ENCODE measurements at regions of chr17 and their contacts with region 1.

Region 1: GRCh38 chr17:8057691-8058114 is 18.8 kb downstream of the ALOX15B start:
- DNase-seq: no peak
- H3K4me3 ChIP-seq: no peak overlapping the region
- H3K27ac ChIP-seq: no peak overlapping the region
- H3K4me1 ChIP-seq: peaks cover 5 to 17% (median 11%) of the 10 kb centered on the region in 4 donors
- H3K27me3 ChIP-seq: peaks cover 3 to 74% (median 29%) of the 10 kb centered on the region in 4 donors
- CTCF ChIP-seq: peak; percentile 76 to 82 (median 77)
- EP300 ChIP-seq: no peak
- POLR2A ChIP-seq: no peak

Region 2: DNA sequence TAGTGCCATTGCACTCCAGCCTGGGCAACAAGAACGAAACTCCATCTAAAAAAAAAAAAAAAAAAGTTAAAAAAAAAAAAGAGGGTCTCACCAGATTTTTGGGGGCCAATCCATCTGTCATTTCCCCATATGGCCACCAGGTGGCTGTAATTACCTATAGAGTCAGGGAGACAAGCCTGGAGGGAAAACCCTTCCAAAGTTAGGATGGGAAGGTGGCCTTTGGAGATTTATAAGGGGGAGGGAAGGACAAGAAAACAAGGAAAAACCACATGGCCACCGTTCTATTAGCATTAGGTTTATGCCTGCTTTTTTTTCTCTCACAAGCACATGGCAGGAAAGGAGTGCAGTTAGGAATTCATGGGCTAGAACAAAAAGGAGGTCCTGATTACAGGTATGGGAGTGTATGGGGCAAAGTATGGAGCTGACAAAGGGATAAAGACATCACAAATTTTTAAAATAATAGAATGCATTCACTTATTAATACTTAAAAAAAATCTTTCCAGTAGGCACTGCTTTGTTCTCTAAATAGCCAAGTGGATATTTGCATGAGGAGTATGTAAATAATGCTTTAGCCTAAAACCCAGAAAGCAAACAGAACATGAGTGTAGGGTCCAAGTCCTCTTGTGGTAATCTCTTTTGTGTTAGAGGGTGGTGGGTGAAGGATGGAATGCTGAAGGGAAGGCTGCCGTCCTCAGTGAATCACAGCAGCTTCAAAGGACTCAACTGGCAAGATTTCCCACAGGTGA is 194.8 kb before region 1 on chr17:
- intact Hi-C with region 1: loop called (anchors 5 kb)
- DNase-seq: no peak
- H3K4me3 ChIP-seq: no peak overlapping the region
- H3K27ac ChIP-seq: no peak overlapping the region
- H3K4me1 ChIP-seq: peaks cover 13 to 27% (median 19%) of the 10 kb centered on the region in 4 donors
- H3K27me3 ChIP-seq: no peaks in the 10 kb centered on the region
- CTCF ChIP-seq: peak; percentile 82 to 89 (median 89)
- EP300 ChIP-seq: no peak
- POLR2A ChIP-seq: no peak

Region 3: GRCh38 chr17:7912927-7913524 is 144.7 kb before region 1 on chr17:
- intact Hi-C with region 1: loop called (anchors 5 kb)
- DNase-seq: no peak
- H3K4me3 ChIP-seq: no peak overlapping the region
- H3K27ac ChIP-seq: no peak overlapping the region
- H3K4me1 ChIP-seq: peaks cover 24 to 29% (median 27%) of the 10 kb centered on the region in 4 donors
- H3K27me3 ChIP-seq: no peaks in the 10 kb centered on the region
- CTCF ChIP-seq: peak; percentile 66 to 83 (median 71)
- EP300 ChIP-seq: no peak
- POLR2A ChIP-seq: no peak

Region 4: DNA sequence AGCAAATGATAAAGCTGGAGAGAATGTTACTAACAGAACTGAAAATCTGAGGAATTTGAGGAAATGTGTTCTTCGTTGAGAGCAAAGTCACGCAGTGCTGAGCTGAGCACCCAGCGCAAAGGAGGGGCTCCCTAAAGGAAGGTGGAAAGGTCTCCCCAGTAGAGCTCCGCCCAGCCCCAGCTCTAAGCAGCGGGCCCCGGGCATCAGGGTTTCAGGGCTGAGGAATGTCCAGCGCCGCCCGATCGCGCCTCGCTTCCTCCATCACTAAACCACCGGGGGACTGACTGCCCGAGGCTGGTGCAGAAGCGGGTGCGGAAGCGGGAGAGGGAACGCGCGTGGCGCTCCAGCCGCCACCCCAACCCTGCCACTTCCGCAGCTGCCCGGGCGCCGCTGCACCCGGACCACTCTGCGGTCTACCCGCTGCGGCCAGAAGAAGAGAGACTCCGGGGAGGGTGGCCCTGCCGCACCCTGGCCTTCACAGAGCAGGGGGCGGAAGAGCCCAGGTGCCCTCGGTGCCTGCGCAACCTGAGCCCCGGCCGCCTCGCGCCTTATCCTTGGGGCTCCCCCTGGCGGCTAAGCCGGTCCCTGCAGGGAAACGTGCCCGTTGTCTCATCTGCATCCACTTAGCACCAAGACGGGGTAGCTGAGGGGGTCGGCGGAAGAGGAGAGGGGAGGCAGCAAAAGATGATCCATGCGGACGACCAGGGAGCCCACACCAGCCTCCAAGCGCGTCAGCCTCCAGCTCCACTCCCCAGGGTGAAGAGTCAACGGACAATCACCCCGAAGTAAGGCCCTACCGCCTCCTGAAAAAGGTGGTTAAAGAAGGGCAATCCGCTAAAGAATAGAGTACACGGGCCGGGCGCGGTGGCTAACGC is 67.7 kb before region 1 on chr17:
- intact Hi-C with region 1: loop called (anchors 5 kb)
- DNase-seq: peak; percentile 95
- H3K4me3 ChIP-seq: peak overlapping the region; percentile 57 to 79 (median 62)
- H3K27ac ChIP-seq: peak overlapping the region; percentile 21 to 68 (median 36)
- H3K4me1 ChIP-seq: peaks cover 7 to 13% (median 11%) of the 10 kb centered on the region in 4 donors
- H3K27me3 ChIP-seq: no peaks in the 10 kb centered on the region
- CTCF ChIP-seq: peak; percentile 90 to 99 (median 96)
- EP300 ChIP-seq: no peak
- POLR2A ChIP-seq: no peak

Region 5: DNA sequence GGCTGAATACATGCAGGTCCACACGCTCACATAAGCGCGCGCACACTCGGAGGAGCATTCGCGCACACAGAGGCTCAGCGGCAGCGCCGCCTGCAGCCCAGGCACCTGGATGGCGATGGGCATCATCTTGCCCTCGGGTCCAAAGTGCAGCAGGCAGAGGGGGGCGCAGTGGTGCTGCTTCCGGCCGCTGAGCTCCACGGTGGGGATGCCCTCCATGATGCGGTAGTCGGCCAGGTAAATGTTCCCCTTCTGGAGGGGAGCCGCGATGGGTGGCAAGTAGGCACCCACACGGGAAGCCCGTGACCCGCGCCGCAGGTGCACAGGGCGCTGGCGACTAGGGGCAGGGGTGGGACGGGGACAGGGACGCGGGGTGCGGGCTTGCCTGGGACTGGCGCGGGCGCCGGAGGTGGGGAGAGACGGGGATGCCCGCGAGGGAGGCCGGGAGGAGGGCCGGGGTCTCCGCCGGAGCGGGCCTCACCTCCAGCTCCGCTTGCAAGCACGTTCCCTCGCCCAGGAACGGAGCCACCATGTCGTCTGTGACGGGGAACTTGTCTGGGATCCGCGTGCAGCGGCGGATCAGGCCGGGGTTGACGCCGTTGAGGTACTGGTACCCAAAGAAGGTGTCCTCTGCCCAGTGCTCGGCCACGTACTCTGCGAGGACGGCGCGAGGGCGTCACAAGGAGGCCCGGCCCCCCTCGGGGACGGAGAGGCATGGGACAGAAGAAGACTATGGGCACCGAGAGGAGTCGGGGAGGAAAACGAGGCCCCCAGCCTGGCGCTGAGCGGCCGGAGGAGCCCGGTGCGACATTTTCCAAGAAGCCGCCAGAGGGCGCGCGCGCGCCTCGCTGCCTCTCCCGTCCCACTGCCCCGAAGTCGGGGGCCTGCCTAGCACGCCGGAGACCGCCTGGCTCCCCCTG is 21.8 kb after region 1 on chr17:
- intact Hi-C with region 1: loop called (anchors 2 kb)
- DNase-seq: no peak
- H3K4me3 ChIP-seq: peak overlapping the region; percentile 47 to 56 (median 48)
- H3K27ac ChIP-seq: no peak overlapping the region
- H3K4me1 ChIP-seq: peaks cover 12 to 20% (median 17%) of the 10 kb centered on the region in 4 donors
- H3K27me3 ChIP-seq: peaks cover 0 to 98% (median 36%) of the 10 kb centered on the region in 4 donors
- CTCF ChIP-seq: peak in 2 of 3 experiments; percentile 75 to 80
- EP300 ChIP-seq: no peak
- POLR2A ChIP-seq: no peak

Region 6: DNA sequence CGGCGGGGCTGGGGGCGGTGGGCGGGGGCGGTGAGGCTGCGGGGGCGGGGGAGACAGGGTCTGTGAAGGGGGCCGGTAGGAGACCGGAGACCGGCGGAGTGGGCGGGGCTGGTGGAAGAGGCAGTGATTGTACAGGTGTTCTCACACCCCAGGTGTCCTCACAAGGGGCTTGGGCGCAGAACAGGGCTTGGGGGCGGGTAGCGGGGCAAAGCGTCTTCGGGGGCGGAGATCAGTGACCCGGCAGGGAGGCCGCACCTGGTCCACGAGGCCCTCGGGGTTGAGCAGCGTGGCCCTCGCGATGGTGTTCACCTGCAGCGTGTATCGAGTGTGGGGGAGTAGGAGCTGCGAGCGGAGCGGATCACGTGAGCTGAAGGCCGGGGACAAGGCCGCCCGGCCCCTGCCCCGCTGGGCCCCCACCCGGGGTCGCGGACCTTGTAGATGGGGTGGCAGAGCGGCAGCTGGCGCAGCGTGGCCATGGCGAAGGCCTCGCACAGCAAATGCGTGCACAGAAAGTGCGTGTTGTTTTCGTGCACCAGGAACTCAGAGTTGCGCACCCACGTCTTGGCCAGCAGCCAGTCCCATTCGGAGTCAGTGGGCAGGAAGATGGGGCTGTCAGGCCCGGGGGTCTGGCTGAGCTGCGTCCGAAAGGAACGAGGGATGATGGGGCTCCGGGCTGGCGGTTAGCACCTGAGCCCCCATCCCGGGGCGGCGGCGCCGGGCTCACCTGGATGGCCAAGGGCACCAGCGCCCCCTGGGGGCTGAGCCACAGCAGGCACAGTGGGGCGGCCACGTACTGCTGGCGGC is 52.2 kb after region 1 on chr17:
- intact Hi-C with region 1: no loop called
- DNase-seq: no peak
- H3K4me3 ChIP-seq: peak overlapping the region in 3 of 4 donors; percentile 27 to 45 (median 31)
- H3K27ac ChIP-seq: no peak overlapping the region
- H3K4me1 ChIP-seq: peaks cover 7 to 11% (median 10%) of the 10 kb centered on the region in 4 donors
- H3K27me3 ChIP-seq: peaks cover 8 to 77% (median 32%) of the 10 kb centered on the region in 4 donors
- CTCF ChIP-seq: peak; percentile 62 to 78 (median 65)
- EP300 ChIP-seq: no peak
- POLR2A ChIP-seq: no peak